ENCODE measurements at regions of chr5 and their contacts with region 1.

Region 1: DNA sequence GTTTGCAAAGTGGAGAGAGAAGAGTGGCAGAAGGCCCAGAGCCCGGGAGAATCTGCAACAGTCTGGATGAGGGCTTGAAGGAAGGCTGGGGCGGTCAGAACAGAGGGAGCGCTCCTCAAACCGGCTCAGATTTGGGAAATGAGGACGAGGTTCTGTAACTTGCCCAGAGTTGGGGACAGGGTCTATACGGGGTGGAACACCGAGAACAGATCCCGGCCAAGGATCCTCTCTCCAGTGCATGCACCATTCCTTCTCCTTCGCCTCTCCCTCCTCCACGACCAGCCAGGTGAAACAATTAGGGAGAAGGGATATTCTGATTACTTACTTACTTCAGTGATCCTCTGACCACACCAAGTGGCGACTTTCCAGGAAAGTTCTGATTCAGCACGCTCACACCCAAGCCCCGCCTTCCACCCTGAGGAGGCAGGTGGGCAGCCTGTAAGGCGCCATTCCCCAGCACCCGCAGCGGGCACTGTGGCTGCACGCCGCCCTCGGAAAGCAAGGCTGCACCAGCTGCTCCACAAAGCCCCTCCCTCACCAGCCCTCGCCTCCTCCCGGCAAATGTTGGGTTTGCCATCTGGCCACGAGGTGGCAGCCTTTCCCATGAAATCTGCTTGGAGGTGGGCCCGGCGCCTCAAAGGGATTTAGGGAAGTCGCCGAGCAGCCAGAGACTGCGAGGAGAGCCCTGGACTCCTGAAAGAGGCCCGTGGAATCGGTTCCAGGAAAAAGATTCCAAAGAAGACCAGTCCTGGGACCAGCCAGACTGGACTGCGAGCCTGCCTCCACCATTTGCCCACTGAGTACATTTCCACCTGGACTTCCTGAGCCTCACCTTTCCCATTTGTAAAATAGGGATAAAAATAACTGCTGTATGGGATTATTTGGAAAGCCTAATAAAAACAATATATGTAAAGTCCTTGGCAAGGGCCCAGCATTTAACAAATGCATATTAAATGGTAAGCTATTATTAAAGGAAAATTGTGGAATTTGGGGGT is 22.2 kb upstream of the WWC1 start:
- DNase-seq: peak; percentile 93
- H3K4me3 ChIP-seq: peak overlapping the region; percentile 20 to 28
- H3K27ac ChIP-seq: peak overlapping the region; percentile 60 to 64
- H3K4me1 ChIP-seq: no peaks in the 10 kb centered on the region
- H3K27me3 ChIP-seq: no peaks in the 10 kb centered on the region
- CTCF ChIP-seq: peak; percentile 86 to 98 (median 93)
- POLR2A ChIP-seq: peak; percentile 39

Region 2: GRCh38 chr5:168434001-168434400 is 164.8 kb after region 1 on chr5:
- intact Hi-C with region 1: loop called (anchors 10 kb)
- DNase-seq: no peak
- H3K4me3 ChIP-seq: no peak overlapping the region
- H3K27ac ChIP-seq: no peak overlapping the region
- H3K4me1 ChIP-seq: no peaks in the 10 kb centered on the region
- H3K27me3 ChIP-seq: no peaks in the 10 kb centered on the region
- CTCF ChIP-seq: no peak
- POLR2A ChIP-seq: no peak

Region 3: DNA sequence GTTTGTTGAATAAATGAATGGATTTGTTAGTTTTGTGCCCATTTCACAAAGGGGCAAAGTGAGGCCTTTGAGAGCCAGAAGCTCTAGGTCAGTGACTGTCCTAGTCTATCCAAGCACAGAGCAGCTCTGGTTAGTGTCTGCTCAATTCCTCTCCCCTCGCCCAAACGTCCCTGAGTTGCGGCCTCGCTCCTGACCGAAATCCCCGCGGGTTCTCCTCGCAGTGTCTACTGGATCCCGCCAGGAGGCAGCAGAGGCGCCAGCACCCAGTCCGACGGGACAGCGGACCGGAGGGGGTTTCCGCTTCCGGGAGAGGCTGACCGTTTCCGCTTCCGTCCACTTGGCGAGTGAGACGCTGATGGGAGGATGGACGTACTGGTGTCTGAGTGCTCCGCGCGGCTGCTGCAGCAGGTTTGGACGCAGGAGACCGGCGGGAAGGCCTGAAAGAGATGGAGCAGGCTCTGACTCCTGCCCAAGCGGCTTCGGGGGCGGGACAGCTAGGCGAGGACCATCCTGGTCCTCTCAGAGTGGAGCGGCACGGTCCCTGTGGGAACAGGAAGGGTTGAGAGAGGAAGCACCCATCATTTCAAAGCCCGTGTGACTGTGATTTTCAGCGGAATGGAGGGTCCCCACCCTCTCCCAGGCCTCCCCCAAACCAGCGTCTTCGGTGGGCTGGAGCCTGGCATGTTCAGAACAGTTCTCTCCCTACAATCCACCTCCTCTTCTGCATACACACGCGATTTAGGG is 217.1 kb after region 1 on chr5 and contains the start of gene RARS1:
- intact Hi-C with region 1: loop called (anchors 2 kb)
- DNase-seq: peak; percentile 90
- H3K4me3 ChIP-seq: peak within 1 kb of the TSS; percentile 67 to 76
- H3K27ac ChIP-seq: peak within 1 kb of the TSS; percentile 64 to 66
- H3K4me1 ChIP-seq: no peaks in the 10 kb centered on the region
- H3K27me3 ChIP-seq: no peaks in the 10 kb centered on the region
- CTCF ChIP-seq: peak; percentile 80 to 97 (median 95)
- POLR2A ChIP-seq: peak; percentile 59
- total RNA-seq, gene RARS1: 71.6 to 86.6 TPM

Measured in prostate gland (tissue), 2 donors.